ENCODE measurements at regions of chr3 and their contacts with region 1.

Region 1: GRCh38 chr3:57587905-57588304 is 9.2 kb downstream of the ARF4 start:
- DNase-seq: no peak
- H3K4me3 ChIP-seq: no peak overlapping the region
- H3K27ac ChIP-seq: no peak overlapping the region
- H3K4me1 ChIP-seq: no peaks in the 10 kb centered on the region
- H3K27me3 ChIP-seq: no peaks in the 10 kb centered on the region
- CTCF ChIP-seq: no peak
- EP300 ChIP-seq: no peak
- POLR2A ChIP-seq: no peak
- RAD21 ChIP-seq: no peak

Region 2: DNA sequence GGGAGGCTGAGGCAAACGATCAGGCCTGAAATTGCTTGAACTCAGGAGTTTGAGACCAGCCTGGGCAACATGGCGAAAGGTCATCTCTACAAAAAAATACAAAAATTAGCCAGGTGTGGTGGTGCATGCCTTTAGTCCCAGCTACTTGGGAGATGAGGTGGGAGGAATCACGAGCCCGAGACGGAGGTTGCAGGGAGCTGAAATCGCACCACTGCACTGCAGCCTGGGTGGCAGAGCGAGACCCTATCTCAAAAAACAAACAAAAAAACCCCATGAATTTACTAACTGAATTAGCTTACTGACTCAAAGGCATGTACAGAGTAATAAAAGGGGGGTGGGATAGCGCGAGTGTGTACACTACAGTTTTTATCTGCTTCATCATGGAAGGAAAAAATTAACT is 10.1 kb before region 1 on chr3:
- CTCF ChIA-PET with region 1: no interaction called
- POLR2A ChIA-PET with region 1: interaction called, 15 read pairs
- DNase-seq: no peak
- H3K4me3 ChIP-seq: no peak overlapping the region
- H3K27ac ChIP-seq: no peak overlapping the region
- H3K4me1 ChIP-seq: no peaks in the 10 kb centered on the region
- H3K27me3 ChIP-seq: no peaks in the 10 kb centered on the region
- CTCF ChIP-seq: no peak
- EP300 ChIP-seq: no peak
- POLR2A ChIP-seq: no peak
- RAD21 ChIP-seq: no peak

Region 3: GRCh38 chr3:57793737-57794187 is 205.9 kb after region 1 on chr3:
- CTCF ChIA-PET with region 1: no interaction called
- POLR2A ChIA-PET with region 1: no interaction called
- DNase-seq: no peak
- H3K4me3 ChIP-seq: no peak overlapping the region
- H3K27ac ChIP-seq: no peak overlapping the region
- H3K4me1 ChIP-seq: no peaks in the 10 kb centered on the region; a peak in 1 of 7 replicates
- H3K27me3 ChIP-seq: no peaks in the 10 kb centered on the region
- CTCF ChIP-seq: no peak
- EP300 ChIP-seq: no peak
- POLR2A ChIP-seq: no peak
- RAD21 ChIP-seq: no peak